GM10248 (cell line): ENCODE measurements at regions of chr21 and their contacts with region 1.

Region 1: GRCh38 chr21:25421327-25422028 is 185.8 kb downstream of the MRPL39 start:
- DNase-seq: peak; percentile 29
- CTCF ChIP-seq: peak; percentile 73

Region 2: DNA sequence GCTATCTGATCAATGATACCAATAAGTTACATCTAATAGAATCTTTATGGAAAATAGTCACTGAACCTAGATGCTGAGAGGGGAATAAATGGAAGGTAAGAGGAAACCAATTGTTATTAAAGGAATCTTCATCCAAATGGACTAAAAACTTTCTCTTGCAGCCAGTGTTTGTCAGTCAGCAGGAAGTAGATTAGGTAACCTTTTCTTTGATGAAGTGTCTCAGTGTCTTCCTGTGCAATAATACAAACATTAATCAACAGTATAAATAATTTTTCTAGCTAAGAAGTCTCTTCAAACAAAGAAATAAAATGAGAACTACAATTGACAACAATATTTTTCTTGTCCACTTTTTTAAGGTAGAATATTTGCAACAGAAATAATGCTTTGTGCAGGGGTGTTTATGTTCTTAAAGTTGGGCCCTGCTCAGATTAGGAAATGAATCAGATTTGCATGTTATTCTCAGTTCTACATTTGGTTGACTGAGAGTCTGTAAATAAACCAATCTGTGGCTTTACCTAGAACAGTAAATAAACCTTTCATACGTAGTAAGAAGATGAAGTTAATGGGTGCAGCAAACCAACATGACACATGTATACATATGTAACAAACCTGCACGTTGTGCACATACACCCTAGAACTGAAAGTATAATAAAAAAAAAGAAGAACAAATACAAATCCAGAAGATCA is 205.6 kb before region 1 on chr21:
- CTCF ChIA-PET with region 1: no interaction called
- POLR2A ChIA-PET with region 1: no interaction called
- DNase-seq: no peak
- CTCF ChIP-seq: no peak

Region 3: GRCh38 chr21:25298512-25299491 is 122.7 kb before region 1 on chr21:
- CTCF ChIA-PET with region 1: no interaction called
- POLR2A ChIA-PET with region 1: no interaction called
- DNase-seq: peak; percentile 8
- CTCF ChIP-seq: no peak

Region 4: DNA sequence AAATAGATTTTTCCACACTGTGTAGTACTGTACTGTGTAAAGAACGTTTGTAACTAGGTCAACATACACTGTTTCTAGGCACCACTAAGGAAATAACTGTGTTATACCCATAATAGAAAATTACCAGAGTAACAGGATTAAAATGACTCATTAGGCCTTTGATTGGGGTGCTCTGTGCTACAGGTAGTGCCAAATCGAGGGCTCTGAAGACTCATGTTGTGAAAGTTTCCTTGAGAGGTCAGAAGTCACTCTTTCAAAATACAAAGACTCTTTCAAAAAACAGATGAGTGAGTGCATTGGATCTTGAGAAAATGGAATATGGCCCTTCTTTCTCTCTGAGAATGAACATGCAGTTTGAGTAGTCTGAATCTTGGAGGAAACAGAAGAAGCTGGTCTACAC is 42.8 kb after region 1 on chr21:
- CTCF ChIA-PET with region 1: interaction called, 12 read pairs
- POLR2A ChIA-PET with region 1: no interaction called
- DNase-seq: no peak
- CTCF ChIP-seq: no peak

Region 5: GRCh38 chr21:25507522-25507921 is 86.0 kb after region 1 on chr21:
- CTCF ChIA-PET with region 1: interaction called, 48 read pairs
- POLR2A ChIA-PET with region 1: interaction called, 3 read pairs
- DNase-seq: no peak
- CTCF ChIP-seq: peak; percentile 39

Region 6: DNA sequence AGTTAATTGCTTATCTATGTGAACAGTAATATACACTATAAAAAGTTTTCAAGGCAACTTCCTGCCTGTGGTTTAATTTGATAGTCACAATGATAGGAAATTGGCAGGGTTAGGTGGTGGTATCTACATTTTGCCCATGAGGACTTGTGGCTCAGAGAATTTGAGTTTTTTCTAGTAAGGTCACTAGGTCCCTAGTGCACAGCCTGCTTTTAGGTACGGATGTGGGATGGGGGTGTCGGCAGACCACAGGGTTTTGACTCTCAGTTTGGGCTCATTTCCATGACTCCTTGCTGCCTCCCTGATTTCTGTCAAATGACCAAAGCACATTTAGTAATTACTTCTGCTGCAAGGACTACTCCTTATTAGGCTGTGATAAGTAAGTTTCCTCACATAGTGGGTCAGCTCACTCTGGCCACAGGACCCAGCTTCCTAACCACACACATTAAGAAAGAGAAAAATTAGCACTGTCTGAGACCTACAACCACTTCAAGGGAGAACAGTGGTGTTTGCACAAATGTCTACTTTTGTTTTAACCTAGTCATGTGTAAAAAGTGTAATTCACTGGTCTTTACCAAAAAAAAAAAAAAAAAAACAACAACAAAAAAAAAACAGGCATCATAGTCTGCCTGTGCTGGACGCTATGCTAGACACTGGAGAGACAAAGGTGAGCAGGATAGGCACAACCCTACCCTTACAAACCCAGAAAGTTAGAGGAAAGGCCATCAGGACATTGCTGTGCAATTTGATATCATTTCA is 142.1 kb after region 1 on chr21:
- CTCF ChIA-PET with region 1: interaction called, 14 read pairs
- POLR2A ChIA-PET with region 1: interaction called, 6 read pairs
- DNase-seq: no peak
- CTCF ChIP-seq: no peak